H1 (cell line): ENCODE measurements at regions of chr11 and their contacts with region 1.

Region 1: DNA sequence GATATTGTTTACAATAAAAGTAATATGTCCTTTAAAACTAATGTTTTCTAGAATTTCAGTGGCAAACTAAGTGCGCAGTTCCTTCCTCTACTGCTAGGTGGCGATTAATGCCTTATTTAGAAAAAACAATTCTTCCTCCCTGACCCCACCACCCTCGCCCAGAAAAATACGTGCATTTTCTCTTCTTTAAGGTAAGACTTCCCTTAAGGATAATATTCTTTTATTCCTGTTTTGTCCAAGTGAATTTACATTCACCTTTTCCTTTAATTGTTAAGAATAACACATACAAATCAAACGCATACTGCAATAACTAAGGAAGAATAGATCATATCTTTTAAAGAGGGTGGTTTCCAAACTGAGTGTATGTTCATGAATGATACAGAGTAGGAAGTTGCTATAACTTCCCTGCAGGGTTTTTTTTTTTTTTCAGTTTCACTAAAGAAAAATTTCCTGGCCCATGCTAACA is 17.0 kb upstream of the PSMA1 start:
- DNase-seq: no peak
- H3K4me3 ChIP-seq: no peak overlapping the region
- H3K27ac ChIP-seq: no peak overlapping the region
- H3K4me1 ChIP-seq: peaks cover 2 to 6% (median 5%) of the 10 kb centered on the region in 4 experiments
- H3K27me3 ChIP-seq: no peaks in the 10 kb centered on the region; a peak in 2 of 7 replicates
- CTCF ChIP-seq: peak in 2 of 3 experiments; percentile 41 to 63; a peak in 2 of 4 replicates
- EP300 ChIP-seq: no peak
- POLR2A ChIP-seq: no peak
- RAD21 ChIP-seq: peak; percentile 67 to 76

Region 2: GRCh38 chr11:14773755-14774154 is 236.6 kb after region 1 on chr11:
- CTCF ChIA-PET with region 1: interaction called, 11 read pairs
- POLR2A ChIA-PET with region 1: no interaction called
- DNase-seq: no peak
- H3K4me3 ChIP-seq: no peak overlapping the region
- H3K27ac ChIP-seq: no peak overlapping the region
- H3K4me1 ChIP-seq: no peaks in the 10 kb centered on the region
- H3K27me3 ChIP-seq: no peaks in the 10 kb centered on the region
- CTCF ChIP-seq: peak in 2 of 3 experiments; percentile 38 to 67; a peak in 2 of 4 replicates
- EP300 ChIP-seq: no peak
- POLR2A ChIP-seq: no peak
- RAD21 ChIP-seq: peak; percentile 36 to 41

Region 3: GRCh38 chr11:14809466-14809865 is 272.3 kb after region 1 on chr11:
- CTCF ChIA-PET with region 1: no interaction called
- POLR2A ChIA-PET with region 1: no interaction called
- DNase-seq: no peak
- H3K4me3 ChIP-seq: no peak overlapping the region
- H3K27ac ChIP-seq: no peak overlapping the region
- H3K4me1 ChIP-seq: no peaks in the 10 kb centered on the region
- H3K27me3 ChIP-seq: no peaks in the 10 kb centered on the region
- CTCF ChIP-seq: no peak
- EP300 ChIP-seq: no peak
- POLR2A ChIP-seq: no peak
- RAD21 ChIP-seq: no peak